ENCODE measurements at regions of chr9 and their contacts with region 1.

Region 1: DNA sequence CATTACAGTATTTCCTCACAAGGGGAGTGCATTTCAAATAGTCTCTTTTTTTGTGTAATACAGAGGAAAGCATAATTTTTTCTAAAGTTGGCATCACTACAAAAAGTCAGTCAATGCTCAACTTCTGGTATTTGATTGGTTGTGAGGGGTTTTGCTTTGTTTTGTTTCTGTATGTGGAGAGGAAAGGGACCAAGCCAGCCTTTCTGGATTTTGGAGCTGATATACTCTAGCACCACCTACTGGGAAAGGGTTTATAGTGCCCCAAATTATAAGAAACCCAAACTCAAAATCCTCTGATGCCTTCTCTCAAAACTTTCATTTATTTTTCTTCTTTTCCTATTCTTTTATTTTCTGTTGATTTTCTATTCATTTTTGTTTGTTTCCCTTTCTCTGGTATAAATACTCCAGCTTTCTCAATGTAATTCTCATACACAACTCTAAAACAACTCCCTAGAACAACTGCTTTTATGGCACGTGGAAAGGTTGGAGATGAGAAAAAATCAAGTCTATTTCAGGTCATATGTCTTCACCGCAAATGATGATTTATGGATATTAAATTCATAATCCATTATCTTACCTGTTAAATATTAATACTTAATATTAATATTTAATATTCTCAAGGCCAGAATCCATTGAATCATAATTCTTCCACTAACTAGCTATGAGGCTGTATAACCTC is 69.5 kb upstream of the ANXA1 start:
- DNase-seq: peak; percentile 35
- ATAC-seq: no peak
- H3K4me3 ChIP-seq: no peak overlapping the region
- H3K4me3 Mint-ChIP-seq: no peak overlapping the region
- H3K27ac ChIP-seq: no peak overlapping the region
- H3K27ac Mint-ChIP-seq: no peak overlapping the region
- H3K4me1 ChIP-seq: no peaks in the 10 kb centered on the region
- H3K4me1 Mint-ChIP-seq: peaks cover 2% of the 10 kb centered on the region
- H3K27me3 ChIP-seq: no peaks in the 10 kb centered on the region
- H3K27me3 Mint-ChIP-seq: no peaks in the 10 kb centered on the region
- CTCF ChIP-seq: peak; percentile 78

Region 2: GRCh38 chr9:72856972-72857623 is 225.0 kb before region 1 on chr9:
- CTCF ChIA-PET with region 1: interaction called, 9 read pairs
- POLR2A ChIA-PET with region 1: no interaction called
- intact Hi-C with region 1: loop called (anchors 2 kb)
- DNase-seq: peak; percentile 34
- ATAC-seq: no peak
- H3K4me3 ChIP-seq: no peak overlapping the region
- H3K4me3 Mint-ChIP-seq: no peak overlapping the region
- H3K27ac ChIP-seq: no peak overlapping the region
- H3K27ac Mint-ChIP-seq: no peak overlapping the region
- H3K4me1 ChIP-seq: no peaks in the 10 kb centered on the region
- H3K4me1 Mint-ChIP-seq: peaks cover 5% of the 10 kb centered on the region
- H3K27me3 ChIP-seq: no peaks in the 10 kb centered on the region
- H3K27me3 Mint-ChIP-seq: no peaks in the 10 kb centered on the region
- CTCF ChIP-seq: peak; percentile 36

Region 3: DNA sequence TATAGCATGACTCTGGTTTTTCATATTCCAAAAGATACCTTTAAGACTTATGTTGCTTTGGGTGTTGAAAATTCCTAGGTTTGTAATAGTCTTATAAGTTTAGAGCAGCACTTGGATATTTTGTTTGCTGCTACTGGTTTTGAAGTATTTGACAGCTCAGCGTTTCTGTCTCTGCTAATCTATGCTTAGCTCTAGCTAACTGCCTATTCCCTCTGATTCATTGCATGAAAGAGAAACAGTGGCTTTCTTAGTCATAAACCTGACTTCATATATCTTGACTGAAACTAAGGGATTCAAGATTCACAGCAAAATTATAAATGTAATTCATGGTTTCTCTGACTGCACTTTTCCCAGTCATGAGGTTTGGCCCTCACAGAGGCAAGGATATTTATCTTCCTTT is 33.9 kb after region 1 on chr9:
- CTCF ChIA-PET with region 1: no interaction called
- POLR2A ChIA-PET with region 1: no interaction called
- intact Hi-C with region 1: no loop called
- DNase-seq: no peak
- ATAC-seq: no peak
- H3K4me3 ChIP-seq: no peak overlapping the region
- H3K4me3 Mint-ChIP-seq: no peak overlapping the region
- H3K27ac ChIP-seq: no peak overlapping the region
- H3K27ac Mint-ChIP-seq: no peak overlapping the region
- H3K4me1 ChIP-seq: no peaks in the 10 kb centered on the region
- H3K4me1 Mint-ChIP-seq: no peaks in the 10 kb centered on the region
- H3K27me3 ChIP-seq: no peaks in the 10 kb centered on the region
- H3K27me3 Mint-ChIP-seq: peaks cover 7% of the 10 kb centered on the region
- CTCF ChIP-seq: no peak

Measured in B cell (primary cell).